ENCODE measurements at regions of chr7 and their contacts with region 1.

Region 1: GRCh38 chr7:22452142-22452959 is 47.6 kb downstream of the STEAP1B start:
- DNase-seq: peak; percentile 81
- H3K4me3 ChIP-seq: peak overlapping the region; percentile 21
- H3K27ac ChIP-seq: no peak overlapping the region
- H3K4me1 ChIP-seq: no peaks in the 10 kb centered on the region
- H3K27me3 ChIP-seq: no peaks in the 10 kb centered on the region
- CTCF ChIP-seq: peak; percentile 60

Region 2: GRCh38 chr7:22302951-22303423 is 149.4 kb before region 1 on chr7:
- intact Hi-C with region 1: loop called (anchors 10 kb)
- DNase-seq: no peak
- H3K4me3 ChIP-seq: no peak overlapping the region
- H3K27ac ChIP-seq: no peak overlapping the region
- H3K4me1 ChIP-seq: no peaks in the 10 kb centered on the region
- H3K27me3 ChIP-seq: no peaks in the 10 kb centered on the region
- CTCF ChIP-seq: no peak

Region 3: DNA sequence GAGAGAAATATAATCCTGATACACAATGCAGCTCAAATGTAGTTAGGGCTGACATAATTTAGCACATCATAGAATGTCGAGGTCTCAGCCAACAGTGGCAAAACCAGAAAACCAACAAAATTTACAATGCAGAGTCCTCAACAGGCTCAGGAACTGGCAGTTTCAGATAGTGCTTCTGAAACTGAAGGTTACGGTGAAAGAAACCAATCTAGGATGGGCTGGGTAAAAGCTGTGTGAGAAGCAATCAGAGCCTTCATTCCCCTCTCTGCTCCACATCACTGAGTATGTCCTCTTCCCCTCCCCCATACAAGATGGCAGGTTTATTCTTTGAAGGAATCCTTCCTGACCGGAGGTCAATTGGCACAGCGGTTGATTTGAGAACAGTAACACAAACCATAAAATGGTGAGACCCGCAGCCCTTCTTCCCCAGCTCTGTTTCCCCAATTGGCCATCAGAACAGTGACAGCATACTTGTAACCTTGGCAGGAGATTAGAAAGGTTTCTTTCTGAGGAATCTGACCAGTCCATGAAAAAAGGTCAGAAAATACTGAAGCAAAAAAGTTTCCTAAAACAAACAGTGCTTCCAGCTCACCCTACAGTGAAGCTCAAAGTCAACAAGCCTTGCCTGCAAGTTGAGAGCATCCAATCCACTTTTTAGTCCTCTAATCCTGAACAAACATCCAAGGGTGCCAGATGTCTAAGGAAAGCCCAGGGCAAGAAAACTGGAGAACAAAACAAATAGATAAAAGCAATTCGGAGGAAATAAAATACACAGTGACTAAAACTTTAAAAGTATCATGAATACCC is 220.7 kb after region 1 on chr7:
- intact Hi-C with region 1: no loop called
- DNase-seq: no peak
- H3K4me3 ChIP-seq: no peak overlapping the region
- H3K27ac ChIP-seq: no peak overlapping the region
- H3K4me1 ChIP-seq: no peaks in the 10 kb centered on the region
- H3K27me3 ChIP-seq: no peaks in the 10 kb centered on the region
- CTCF ChIP-seq: no peak

Region 4: DNA sequence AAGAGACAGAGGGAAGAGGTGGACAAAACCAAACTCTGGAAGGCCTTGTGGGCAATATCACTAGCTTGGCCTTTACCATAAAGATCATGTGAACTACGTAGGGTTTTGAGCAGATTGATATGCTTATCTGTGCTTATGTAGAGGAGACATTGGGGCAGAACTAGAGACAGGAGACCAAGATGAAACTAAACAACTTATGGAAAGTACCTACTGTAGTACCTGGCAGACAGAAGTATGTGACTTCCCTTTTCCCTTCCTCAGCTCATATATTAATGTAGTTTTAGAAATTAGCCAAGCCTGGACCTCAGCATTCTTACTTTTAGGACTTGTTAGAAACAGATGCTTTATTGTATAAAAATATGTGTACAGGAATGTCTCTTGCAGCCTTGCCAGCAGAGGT is 260.6 kb after region 1 on chr7:
- intact Hi-C with region 1: no loop called
- DNase-seq: no peak
- H3K4me3 ChIP-seq: no peak overlapping the region
- H3K27ac ChIP-seq: no peak overlapping the region
- H3K4me1 ChIP-seq: no peaks in the 10 kb centered on the region
- H3K27me3 ChIP-seq: no peaks in the 10 kb centered on the region
- CTCF ChIP-seq: no peak